Activated CD4-positive, alpha-beta T cell treated with anti-CD3 and anti-CD28 coated beads for 36 hours (primary cell): ENCODE measurements at regions of chr19 and their contacts with region 1.

Region 1: GRCh38 chr19:17215125-17215971 is at the start of gene USE1:
- DNase-seq: peak; percentile 93
- ATAC-seq: peak; percentile 97
- H3K4me3 Mint-ChIP-seq: peak within 1 kb of the TSS; percentile 80
- H3K27ac Mint-ChIP-seq: peak within 1 kb of the TSS; percentile 95
- H3K4me1 Mint-ChIP-seq: peaks cover 21% of the 10 kb centered on the region
- H3K27me3 Mint-ChIP-seq: no peaks in the 10 kb centered on the region
- total RNA-seq, gene USE1: 22.6 to 24.5 TPM

Region 2: GRCh38 chr19:16751733-16752132 is 463.6 kb before region 1 on chr19:
- CTCF ChIA-PET with region 1: no interaction called
- POLR2A ChIA-PET with region 1: no interaction called
- intact Hi-C with region 1: no loop called
- DNase-seq: no peak
- ATAC-seq: no peak
- H3K4me3 Mint-ChIP-seq: no peak overlapping the region
- H3K27ac Mint-ChIP-seq: no peak overlapping the region
- H3K4me1 Mint-ChIP-seq: no peaks in the 10 kb centered on the region
- H3K27me3 Mint-ChIP-seq: peaks cover 4% of the 10 kb centered on the region

Region 3: GRCh38 chr19:16814526-16815100 is 400.7 kb before region 1 on chr19:
- CTCF ChIA-PET with region 1: no interaction called
- POLR2A ChIA-PET with region 1: no interaction called
- intact Hi-C with region 1: no loop called
- DNase-seq: no peak
- ATAC-seq: no peak
- H3K4me3 Mint-ChIP-seq: no peak overlapping the region
- H3K27ac Mint-ChIP-seq: no peak overlapping the region
- H3K4me1 Mint-ChIP-seq: no peaks in the 10 kb centered on the region
- H3K27me3 Mint-ChIP-seq: peaks cover 3% of the 10 kb centered on the region

Region 4: GRCh38 chr19:16862826-16863415 is 352.4 kb before region 1 on chr19:
- CTCF ChIA-PET with region 1: no interaction called
- POLR2A ChIA-PET with region 1: no interaction called
- intact Hi-C with region 1: no loop called
- DNase-seq: no peak
- ATAC-seq: no peak
- H3K4me3 Mint-ChIP-seq: no peak overlapping the region
- H3K27ac Mint-ChIP-seq: no peak overlapping the region
- H3K4me1 Mint-ChIP-seq: no peaks in the 10 kb centered on the region
- H3K27me3 Mint-ChIP-seq: no peaks in the 10 kb centered on the region

Region 5: GRCh38 chr19:17183858-17184321 is 31.5 kb before region 1 on chr19:
- CTCF ChIA-PET with region 1: no interaction called
- POLR2A ChIA-PET with region 1: no interaction called
- intact Hi-C with region 1: loop called in 1 of 2 experiments (anchors 1 kb)
- DNase-seq: peak; percentile 33
- ATAC-seq: peak; percentile 60
- H3K4me3 Mint-ChIP-seq: peak overlapping the region; percentile 59
- H3K27ac Mint-ChIP-seq: peak overlapping the region; percentile 89
- H3K4me1 Mint-ChIP-seq: peaks cover 22% of the 10 kb centered on the region
- H3K27me3 Mint-ChIP-seq: no peaks in the 10 kb centered on the region

Region 6: DNA sequence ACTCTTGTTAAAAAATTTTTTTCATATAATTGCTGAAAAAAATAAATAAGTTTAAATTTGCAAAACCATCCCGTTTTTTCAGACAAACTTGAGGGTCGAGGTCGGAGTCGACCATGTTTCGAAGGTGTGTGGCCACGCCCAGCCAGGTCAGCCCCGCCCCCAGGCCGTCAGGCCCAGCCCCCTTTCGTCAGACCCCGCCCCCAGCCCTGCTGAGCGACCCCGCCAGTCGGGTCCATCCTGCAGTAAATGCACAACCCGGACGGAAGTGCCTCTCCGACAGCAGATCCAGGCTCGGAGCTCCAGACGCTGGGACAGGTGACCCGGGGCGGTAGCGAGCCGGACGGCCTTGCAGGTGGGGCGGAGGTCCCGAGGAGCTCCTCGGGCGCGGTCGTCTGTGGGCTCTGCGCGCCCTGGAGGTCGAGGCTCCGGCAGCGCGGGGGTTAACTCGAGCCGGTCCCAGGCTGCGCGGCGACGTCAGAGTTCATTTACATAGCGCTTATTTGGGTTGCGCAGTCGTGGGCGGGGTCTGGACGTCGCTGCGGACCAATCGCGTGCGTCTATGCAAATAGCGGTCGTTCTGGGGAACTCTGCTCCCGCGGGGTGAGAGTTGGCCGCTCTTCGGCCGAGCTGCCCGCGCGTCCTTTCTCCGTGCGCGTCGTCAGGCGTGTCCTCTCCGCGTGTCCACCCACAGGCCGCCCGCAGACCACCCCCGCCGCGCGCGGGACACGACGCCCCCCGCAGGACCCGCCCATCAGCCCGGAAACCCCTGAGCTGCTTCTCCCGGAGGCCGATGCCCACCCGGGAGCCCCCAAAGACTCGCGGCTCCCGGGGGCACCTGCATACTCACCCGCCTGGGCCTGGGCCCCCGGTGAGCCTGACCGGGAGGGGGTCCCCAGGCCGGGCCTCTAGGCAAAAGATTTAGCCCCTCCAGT is 10.9 kb after region 1 on chr19 and contains the start of gene OCEL1:
- CTCF ChIA-PET with region 1: interaction called, 5 read pairs
- POLR2A ChIA-PET with region 1: interaction called, 4 read pairs
- intact Hi-C with region 1: loop called (anchors 1 kb)
- DNase-seq: peak; percentile 99
- ATAC-seq: peak; percentile 92
- H3K4me3 Mint-ChIP-seq: peak within 1 kb of the TSS; percentile 80
- H3K27ac Mint-ChIP-seq: peak within 1 kb of the TSS; percentile 93
- H3K4me1 Mint-ChIP-seq: peaks cover 7% of the 10 kb centered on the region
- H3K27me3 Mint-ChIP-seq: no peaks in the 10 kb centered on the region
- total RNA-seq, gene OCEL1: 10.9 to 11.7 TPM

Region 7: DNA sequence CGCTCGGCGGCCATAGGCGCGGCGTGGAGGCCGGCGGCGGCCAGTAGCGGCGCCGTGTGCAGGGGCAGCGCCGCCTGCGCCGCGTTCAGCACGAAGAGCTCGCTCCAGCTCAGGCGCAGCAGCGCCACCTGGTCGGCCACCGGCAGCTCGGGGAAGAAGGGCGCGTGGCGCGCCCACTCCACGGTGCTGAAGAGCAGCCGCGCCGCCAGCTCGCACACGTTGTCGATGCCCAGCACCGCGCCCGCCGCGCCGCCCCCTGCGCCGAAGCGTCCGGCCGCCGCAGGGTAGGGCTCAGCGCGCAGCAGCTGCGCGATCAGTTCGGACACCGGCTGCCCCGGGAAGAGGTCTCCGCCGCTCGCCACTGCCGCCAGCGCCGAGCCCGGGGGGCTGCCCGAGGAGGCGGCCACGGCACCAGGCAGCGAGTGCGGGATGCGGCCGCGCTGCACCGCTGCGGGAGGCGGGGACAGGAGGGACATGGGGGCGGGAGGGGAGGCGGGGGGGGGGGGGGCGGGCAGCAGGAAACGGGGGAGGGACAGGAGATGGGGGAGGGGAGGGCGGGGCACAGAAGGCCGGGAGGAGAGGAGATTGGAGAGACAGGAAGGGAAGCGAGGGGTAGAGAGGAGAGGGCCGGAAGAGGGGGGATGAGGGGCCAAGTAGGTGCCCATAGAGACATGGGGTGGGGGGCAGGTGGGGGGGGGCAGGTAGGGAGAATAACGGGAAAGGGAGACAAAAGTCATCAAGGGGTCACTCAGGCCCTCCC is 20.4 kb after region 1 on chr19:
- CTCF ChIA-PET with region 1: interaction called, 5 read pairs
- POLR2A ChIA-PET with region 1: interaction called, 3 read pairs
- intact Hi-C with region 1: loop called in 1 of 2 experiments (anchors 1 kb)
- DNase-seq: peak; percentile 87
- ATAC-seq: peak; percentile 85
- H3K4me3 Mint-ChIP-seq: peak overlapping the region; percentile 79
- H3K27ac Mint-ChIP-seq: peak overlapping the region; percentile 65
- H3K4me1 Mint-ChIP-seq: peaks cover 9% of the 10 kb centered on the region
- H3K27me3 Mint-ChIP-seq: no peaks in the 10 kb centered on the region

Region 8: DNA sequence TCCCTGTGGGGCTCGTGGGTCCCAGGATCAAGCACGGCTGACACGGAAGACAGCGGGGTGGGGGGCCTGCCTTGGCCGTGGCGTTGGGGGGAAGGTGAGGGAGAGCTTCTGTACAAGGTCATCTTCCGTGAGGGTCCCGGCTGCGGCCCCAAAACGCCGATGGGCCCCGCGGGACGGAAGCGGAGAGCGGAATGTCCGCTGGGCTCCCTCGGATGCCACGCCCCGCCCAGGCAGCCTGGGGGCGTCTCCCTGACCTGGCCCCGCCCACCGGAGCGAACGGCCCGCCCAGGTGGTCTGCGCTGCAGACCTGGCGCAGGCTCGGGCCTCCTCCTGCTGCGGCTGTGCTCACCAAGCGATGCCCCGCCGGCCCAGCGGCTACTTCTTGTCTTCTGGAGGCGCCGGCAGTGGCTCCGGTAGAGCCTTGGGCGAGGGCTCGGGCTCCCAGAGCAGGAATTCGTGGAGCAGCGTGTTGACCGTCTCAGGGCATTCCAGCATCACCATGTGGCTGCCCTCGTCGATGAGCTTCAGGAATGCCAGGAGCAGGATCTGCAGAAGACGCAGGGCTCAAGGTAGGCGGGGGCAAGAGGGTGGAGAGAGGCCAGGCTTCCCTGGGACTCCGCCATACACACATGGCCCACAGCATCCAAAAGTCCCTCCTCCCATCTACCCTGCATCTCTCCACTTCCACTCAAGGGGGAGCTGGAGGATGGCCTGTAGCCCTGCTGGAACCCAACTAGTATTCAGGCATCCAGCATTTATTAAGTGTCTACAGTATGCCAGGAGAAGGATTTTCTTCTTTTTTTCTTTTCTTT is 77.1 kb after region 1 on chr19:
- CTCF ChIA-PET with region 1: interaction called, 4 read pairs
- POLR2A ChIA-PET with region 1: no interaction called
- intact Hi-C with region 1: loop called in 1 of 2 experiments (anchors 1 kb)
- DNase-seq: peak; percentile 90
- ATAC-seq: peak; percentile 98
- H3K4me3 Mint-ChIP-seq: peak overlapping the region; percentile 88
- H3K27ac Mint-ChIP-seq: peak overlapping the region; percentile 84
- H3K4me1 Mint-ChIP-seq: peaks cover 5% of the 10 kb centered on the region
- H3K27me3 Mint-ChIP-seq: no peaks in the 10 kb centered on the region

Region 9: DNA sequence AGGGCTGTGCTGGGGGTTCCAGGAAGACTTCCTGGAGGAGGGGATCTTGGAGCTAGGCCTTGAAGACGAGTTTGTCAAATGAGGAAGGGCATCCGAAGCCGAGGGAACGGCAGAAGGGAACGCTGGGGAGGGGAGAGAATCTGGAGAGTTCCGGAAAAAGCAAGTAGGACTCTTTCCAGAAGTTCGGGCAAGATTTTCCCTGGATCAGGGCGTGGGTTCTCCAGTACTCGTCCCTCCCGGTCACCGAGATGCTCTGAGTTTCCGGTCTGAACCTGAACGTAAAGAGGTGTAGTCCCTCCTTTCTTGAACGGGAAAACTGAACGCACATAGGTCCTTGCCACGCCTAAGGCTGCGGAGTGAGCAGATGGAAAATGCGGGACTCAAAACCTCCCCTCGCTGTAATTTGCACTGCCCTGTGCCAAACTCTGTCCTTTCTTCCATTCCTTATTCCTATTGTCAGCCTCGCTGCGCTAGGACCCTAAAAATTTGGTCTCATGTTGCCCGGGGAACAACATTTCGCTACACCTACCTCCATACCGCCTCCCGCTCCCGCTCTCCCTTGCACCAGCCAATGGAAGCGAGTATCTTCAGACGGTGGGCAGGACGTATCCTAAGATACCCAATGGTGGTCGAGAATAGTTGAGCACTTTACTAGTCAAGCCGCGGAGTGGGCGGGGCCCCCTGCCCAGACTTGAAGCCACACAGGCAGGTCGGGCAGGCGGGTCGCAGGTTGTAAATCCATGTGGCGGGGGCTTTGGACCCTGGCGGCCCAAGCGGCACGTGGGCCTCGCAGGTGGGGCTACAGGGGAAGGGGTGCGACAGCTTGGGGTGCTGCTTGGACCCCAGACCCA is 121.7 kb after region 1 on chr19 and contains the start of gene GTPBP3:
- CTCF ChIA-PET with region 1: interaction called, 5 read pairs
- POLR2A ChIA-PET with region 1: no interaction called
- intact Hi-C with region 1: loop called in 1 of 2 experiments (anchors 1 kb)
- DNase-seq: peak; percentile 98
- ATAC-seq: peak; percentile 89
- H3K4me3 Mint-ChIP-seq: peak within 1 kb of the TSS; percentile 98
- H3K27ac Mint-ChIP-seq: peak within 1 kb of the TSS; percentile 98
- H3K4me1 Mint-ChIP-seq: peaks cover 25% of the 10 kb centered on the region
- H3K27me3 Mint-ChIP-seq: no peaks in the 10 kb centered on the region
- total RNA-seq, gene GTPBP3: 37.3 to 39.8 TPM

Region 10: DNA sequence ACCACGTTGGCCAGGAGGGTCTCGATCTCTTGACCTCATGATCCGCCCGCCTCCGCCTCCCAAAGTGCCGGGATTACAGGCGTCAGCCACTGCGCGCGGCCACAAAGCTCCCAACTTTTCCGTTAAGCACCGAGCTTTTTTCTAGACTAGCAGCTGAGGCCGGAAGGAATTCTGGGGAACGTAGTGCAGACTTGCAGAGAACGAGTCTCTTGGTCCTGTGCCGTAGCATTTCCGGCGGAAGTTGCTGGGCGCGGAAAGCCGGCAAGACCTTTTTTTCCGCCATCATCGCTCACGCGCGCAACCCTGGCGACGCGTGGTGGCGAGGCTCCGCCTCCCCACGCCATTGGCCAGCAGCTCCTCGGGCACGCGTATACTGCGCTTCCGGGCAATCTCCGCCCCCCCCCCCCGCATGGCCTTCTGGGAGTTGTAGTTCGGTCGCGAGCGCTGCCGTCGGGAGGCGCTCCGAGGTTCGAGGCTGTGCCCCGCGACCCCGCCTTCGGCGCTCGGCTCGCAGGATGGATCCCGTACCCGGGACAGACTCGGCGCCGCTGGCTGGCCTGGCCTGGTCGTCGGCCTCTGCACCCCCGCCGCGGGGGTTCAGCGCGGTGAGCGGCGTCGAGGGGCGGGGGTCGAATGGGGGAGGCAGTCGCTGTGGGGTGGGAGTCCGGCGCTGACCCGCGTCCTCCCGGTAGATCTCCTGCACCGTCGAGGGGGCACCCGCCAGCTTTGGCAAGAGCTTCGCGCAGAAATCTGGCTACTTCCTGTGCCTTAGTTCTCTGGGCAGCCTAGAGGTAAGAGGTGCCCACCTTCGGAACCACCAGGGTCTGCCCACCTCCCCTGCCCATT is 204.5 kb after region 1 on chr19 and contains the start of gene MVB12A:
- CTCF ChIA-PET with region 1: no interaction called
- POLR2A ChIA-PET with region 1: no interaction called
- intact Hi-C with region 1: loop called in 1 of 2 experiments (anchors 1 kb)
- DNase-seq: peak; percentile 97
- ATAC-seq: peak; percentile 95
- H3K4me3 Mint-ChIP-seq: peak within 1 kb of the TSS; percentile 91
- H3K27ac Mint-ChIP-seq: peak within 1 kb of the TSS; percentile 87
- H3K4me1 Mint-ChIP-seq: peaks cover 11% of the 10 kb centered on the region
- H3K27me3 Mint-ChIP-seq: no peaks in the 10 kb centered on the region
- total RNA-seq, gene MVB12A: 27.6 to 32.6 TPM